ENCODE measurements at regions of chr16 and their contacts with region 1.

Region 1: GRCh38 chr16:89922884-89923690 is at the start of gene TUBB3:
- DNase-seq: peak; percentile 58
- H3K4me3 Mint-ChIP-seq: peak within 1 kb of the TSS; percentile 63
- H3K27ac Mint-ChIP-seq: no peak within 1 kb of the TSS
- H3K4me1 Mint-ChIP-seq: peaks cover 53% of the 10 kb centered on the region
- H3K27me3 Mint-ChIP-seq: peaks cover 52% of the 10 kb centered on the region
- total RNA-seq, gene TUBB3: 1.1 to 1.6 TPM

Region 2: DNA sequence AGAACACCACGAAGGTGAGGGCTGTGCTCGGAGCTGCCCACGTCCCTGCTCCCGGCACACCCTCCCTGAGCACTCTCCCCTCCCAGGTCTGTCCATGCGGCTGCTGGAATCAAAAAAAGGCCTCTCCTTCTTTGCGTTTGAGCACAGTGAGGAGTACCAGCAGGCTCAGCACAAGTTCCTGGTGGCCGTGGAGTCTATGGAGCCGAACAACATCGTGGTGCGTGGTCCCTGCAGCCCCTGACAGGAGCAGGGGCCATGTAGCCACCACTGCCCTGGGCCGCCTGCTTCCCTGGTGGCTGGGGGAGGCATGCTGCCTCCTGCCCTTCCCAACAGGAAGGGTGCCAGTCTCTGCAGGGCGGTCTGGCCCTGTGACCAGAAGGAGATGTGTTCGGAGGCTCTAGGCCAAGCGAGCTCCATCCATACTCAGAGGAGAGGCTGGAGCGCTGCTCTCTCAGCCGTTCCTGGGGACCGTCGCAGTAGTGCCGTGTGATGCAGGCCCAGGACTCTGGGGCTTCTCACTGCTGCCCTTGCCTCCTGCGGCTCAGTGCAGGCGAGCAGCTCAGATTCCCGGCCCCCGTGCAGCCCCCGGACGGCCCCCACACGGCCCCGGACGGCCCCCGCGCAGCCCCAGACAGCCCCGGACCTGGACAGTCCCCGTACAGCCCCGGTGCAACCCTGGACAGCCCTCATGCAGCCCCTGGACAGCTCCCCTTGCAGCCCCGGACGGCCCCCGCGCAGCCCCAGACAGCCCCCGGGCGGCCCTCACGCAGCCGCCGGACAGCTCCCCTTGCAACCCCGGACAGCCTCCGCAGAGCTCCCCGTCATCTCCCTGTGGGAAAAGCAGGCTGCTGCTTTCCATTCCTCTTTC is 29.2 kb before region 1 on chr16:
- CTCF ChIA-PET with region 1: no interaction called
- POLR2A ChIA-PET with region 1: no interaction called
- DNase-seq: no peak
- H3K4me3 Mint-ChIP-seq: no peak overlapping the region
- H3K27ac Mint-ChIP-seq: no peak overlapping the region
- H3K4me1 Mint-ChIP-seq: peaks cover 13% of the 10 kb centered on the region
- H3K27me3 Mint-ChIP-seq: no peaks in the 10 kb centered on the region

Region 3: GRCh38 chr16:89909777-89910716 is 13.0 kb before region 1 on chr16:
- CTCF ChIA-PET with region 1: interaction called, 18 read pairs
- POLR2A ChIA-PET with region 1: no interaction called
- DNase-seq: peak; percentile 70
- H3K4me3 Mint-ChIP-seq: no peak overlapping the region
- H3K27ac Mint-ChIP-seq: no peak overlapping the region
- H3K4me1 Mint-ChIP-seq: peaks cover 8% of the 10 kb centered on the region
- H3K27me3 Mint-ChIP-seq: no peaks in the 10 kb centered on the region

Region 4: DNA sequence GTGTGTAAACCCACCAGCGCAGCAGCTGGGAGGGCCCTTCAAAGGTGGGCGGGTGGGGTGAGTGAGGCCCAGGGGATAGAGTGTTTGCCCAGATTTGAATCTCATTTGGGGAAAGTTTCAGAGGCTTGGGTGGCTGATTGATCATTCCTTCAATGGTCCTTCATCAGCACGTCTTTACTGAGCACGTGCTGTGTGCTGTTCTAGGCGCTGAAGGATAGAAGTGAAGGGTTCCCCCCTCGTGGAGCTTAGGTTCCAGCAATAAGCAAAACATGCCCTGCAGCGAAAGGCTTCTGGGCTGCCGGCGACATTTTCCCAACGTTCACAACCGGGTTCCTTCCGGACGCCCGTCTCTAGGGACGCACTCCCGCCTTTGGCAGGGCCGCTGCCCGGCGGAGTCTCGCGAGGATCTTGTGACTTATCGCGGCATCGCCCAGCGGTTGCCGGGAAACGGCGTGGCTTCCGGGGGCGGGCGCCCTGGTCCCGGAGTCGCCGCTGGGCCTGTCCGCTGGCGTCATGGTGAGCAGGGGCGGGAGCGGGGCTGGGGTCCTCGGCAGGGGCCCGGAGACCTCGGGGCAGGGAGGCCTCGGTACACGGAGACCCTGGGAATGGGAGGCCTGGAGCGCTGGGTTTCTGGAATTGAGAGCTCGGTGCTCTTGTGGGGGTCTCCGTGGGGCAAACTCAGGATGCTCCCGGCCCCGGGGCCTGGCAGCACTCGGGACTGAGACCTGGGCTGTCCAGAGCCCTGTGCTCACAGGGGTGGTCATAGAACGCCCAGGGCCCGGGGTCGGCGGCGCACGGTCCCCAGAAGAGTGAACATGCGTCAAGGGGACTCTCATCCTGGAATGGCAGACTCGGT is 99.3 kb after region 1 on chr16:
- CTCF ChIA-PET with region 1: no interaction called
- POLR2A ChIA-PET with region 1: no interaction called
- DNase-seq: peak; percentile 84
- H3K4me3 Mint-ChIP-seq: peak overlapping the region; percentile 71
- H3K27ac Mint-ChIP-seq: peak overlapping the region; percentile 57
- H3K4me1 Mint-ChIP-seq: peaks cover 26% of the 10 kb centered on the region
- H3K27me3 Mint-ChIP-seq: peaks cover 23% of the 10 kb centered on the region

Measured in activated CD4-positive, alpha-beta T cell treated with anti-CD3 and anti-CD28 coated beads, Interleukin-2, amount 10 ng/mL, durations not matched to agents 7 days and 5 days (primary cell).